Gastrocnemius medialis (tissue), 4 donors: ENCODE measurements at regions of chr1 and their contacts with region 1.

Region 1: GRCh38 chr1:186325239-186325638 is 49.8 kb downstream of the TPR start:
- DNase-seq: no peak
- ATAC-seq: no peak
- H3K4me3 ChIP-seq: no peak overlapping the region
- H3K27ac ChIP-seq: no peak overlapping the region
- H3K4me1 ChIP-seq: no peaks in the 10 kb centered on the region
- H3K27me3 ChIP-seq: no peaks in the 10 kb centered on the region
- CTCF ChIP-seq: no peak
- POLR2A ChIP-seq: no peak

Region 2: DNA sequence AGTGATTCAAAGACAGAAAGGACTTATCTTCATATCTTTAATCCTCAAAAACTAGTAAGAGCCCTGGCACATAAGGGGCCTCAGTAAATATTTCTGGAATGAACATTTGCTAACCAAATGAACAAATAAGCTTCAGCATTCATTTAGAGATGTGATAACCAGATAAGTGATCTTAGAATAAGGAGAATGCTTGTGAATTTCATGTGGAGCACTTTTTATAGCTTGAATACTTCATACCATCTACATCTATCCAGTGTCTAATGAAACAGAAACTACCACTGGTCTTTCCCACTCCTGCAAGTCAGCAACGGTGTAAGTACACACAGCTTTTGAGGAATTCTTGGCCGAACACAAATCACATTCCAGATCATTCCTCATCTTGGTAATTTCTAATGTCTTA is 1609.1 kb before region 1 on chr1:
- in situ Hi-C with region 1: loop called in 1 of 4 experiments (anchors 25 kb)
- intact Hi-C with region 1: no loop called
- DNase-seq: no peak
- ATAC-seq: no peak
- H3K4me3 ChIP-seq: no peak overlapping the region
- H3K27ac ChIP-seq: no peak overlapping the region
- H3K4me1 ChIP-seq: no peaks in the 10 kb centered on the region
- H3K27me3 ChIP-seq: no peaks in the 10 kb centered on the region
- CTCF ChIP-seq: no peak
- POLR2A ChIP-seq: no peak

Region 3: DNA sequence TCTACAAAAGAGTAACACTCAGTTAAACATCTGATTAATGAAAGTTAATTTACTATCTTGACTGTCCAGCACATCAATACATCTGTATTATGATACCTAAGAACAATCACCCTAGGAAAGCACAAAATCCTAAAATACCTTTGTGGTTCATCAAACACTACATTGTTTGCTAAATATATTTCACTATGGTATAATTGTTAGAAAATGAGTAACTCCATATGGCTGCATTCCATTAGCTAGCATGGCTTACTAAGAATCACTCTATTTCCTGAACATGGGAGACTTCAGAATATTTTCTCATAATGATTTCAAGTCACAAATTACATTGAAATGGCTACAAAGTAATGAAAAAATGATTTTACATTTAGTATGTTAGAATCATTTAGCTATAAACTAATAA is 1181.0 kb before region 1 on chr1:
- in situ Hi-C with region 1: loop called in 3 of 4 experiments (anchors 25 kb)
- intact Hi-C with region 1: no loop called
- DNase-seq: no peak
- ATAC-seq: no peak
- H3K4me3 ChIP-seq: no peak overlapping the region
- H3K27ac ChIP-seq: no peak overlapping the region
- H3K4me1 ChIP-seq: no peaks in the 10 kb centered on the region
- H3K27me3 ChIP-seq: no peaks in the 10 kb centered on the region
- CTCF ChIP-seq: no peak
- POLR2A ChIP-seq: no peak

Region 4: GRCh38 chr1:186363891-186364290 is 38.7 kb after region 1 on chr1:
- in situ Hi-C with region 1: loop called in 1 of 4 experiments (anchors 5 kb)
- intact Hi-C with region 1: no loop called
- DNase-seq: no peak
- ATAC-seq: no peak
- H3K4me3 ChIP-seq: no peak overlapping the region
- H3K27ac ChIP-seq: no peak overlapping the region
- H3K4me1 ChIP-seq: no peaks in the 10 kb centered on the region
- H3K27me3 ChIP-seq: no peaks in the 10 kb centered on the region
- CTCF ChIP-seq: no peak
- POLR2A ChIP-seq: no peak